ENCODE measurements at regions of chr1 and their contacts with region 1.

Region 1: DNA sequence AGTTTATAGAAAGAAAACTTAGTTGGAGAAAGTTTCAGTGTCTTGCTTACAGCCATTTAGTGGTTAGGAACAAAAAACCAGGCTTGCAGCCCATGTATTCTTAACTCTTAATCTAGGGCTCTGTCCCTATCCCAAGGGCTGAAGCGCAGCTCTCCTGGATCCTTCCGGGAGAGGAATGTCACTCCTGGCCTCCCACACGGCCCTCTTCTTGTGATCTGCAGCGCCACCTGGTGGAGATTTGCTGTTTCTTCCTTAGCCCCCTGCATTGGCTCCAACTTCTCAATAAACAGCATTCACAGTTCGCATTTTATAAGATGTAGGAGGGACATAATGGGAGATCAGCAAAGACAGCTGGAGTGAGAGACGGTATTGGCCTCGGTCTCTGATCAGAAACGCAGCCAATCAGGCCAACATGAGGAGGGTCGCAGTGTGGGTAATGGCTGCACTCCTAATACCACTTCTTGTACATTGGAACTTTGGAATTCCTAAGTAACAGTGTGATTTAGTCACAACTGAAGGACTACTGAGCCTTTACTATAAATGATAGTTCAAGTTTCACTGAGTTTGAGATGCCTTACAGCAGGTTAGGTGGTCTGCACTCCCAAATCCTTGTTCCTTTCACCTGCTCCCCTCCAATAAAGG is 283.4 kb downstream of the ASTN1 start:
- DNase-seq: peak in 1 of 2 experiments; percentile 38
- H3K4me3 ChIP-seq: no peak overlapping the region
- H3K27ac ChIP-seq: no peak overlapping the region
- H3K4me1 ChIP-seq: no peaks in the 10 kb centered on the region
- H3K27me3 ChIP-seq: peaks cover 17% of the 10 kb centered on the region
- CTCF ChIP-seq: peak; percentile 89

Region 2: DNA sequence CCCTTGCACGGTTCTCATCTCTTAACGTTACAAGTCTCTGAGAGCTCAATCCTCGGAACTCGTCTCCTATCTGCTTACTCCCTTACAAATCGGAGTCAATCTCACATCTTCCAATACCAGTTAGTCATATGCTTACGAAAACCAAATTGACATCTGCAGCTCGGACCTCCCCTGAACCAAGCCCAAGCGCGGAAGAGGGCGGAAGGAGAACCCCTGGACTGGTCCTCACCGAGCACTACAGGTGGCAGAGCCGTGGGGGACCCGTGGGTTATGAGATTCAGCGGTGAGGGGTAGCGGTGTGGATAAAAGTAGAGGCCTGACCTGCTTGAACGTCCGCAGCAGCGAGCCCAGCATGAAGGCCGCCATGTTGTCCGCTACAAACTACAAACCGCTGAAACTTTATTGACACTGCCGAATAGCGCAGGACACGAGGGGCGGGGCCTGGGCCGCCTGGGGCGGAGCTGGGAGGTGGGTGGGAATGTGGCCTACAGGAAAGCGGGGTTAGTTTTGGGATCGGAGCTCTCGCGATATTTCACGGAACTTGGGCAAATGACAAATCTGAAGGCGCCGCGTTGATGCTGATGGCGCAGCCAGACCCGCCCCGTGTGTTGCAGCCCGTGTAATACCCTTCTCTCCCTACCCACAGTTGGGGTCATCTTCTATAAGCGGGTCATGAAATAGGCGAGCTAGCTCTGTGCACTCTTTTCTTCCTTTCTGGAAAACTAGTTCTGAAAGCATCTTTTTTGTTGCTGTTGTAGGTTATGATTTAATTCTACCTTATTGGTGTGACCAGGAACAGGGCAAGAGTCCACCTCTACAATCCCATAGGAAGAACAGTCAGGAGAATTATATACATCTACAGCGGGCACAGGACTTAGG is 1857.8 kb before region 1 on chr1 and contains the start of gene MRPS14:
- CTCF ChIA-PET with region 1: no interaction called
- POLR2A ChIA-PET with region 1: no interaction called
- intact Hi-C with region 1: loop called (anchors 5 kb)
- DNase-seq: peak; percentile 88 to 96
- H3K4me3 ChIP-seq: peak within 1 kb of the TSS; percentile 95
- H3K27ac ChIP-seq: peak within 1 kb of the TSS; percentile 82
- H3K4me1 ChIP-seq: peaks cover 12% of the 10 kb centered on the region; the same call in 1 of the 2 replicates
- H3K27me3 ChIP-seq: no peaks in the 10 kb centered on the region
- CTCF ChIP-seq: no peak
- total RNA-seq, gene MRPS14: 24.1 and 28.8 TPM in 2 replicates

Region 3: GRCh38 chr1:176374967-176375569 is 506.0 kb before region 1 on chr1:
- CTCF ChIA-PET with region 1: no interaction called
- POLR2A ChIA-PET with region 1: no interaction called
- intact Hi-C with region 1: loop called (anchors 1 kb)
- DNase-seq: peak; percentile 42 to 59
- H3K4me3 ChIP-seq: no peak overlapping the region
- H3K27ac ChIP-seq: no peak overlapping the region
- H3K4me1 ChIP-seq: no peaks in the 10 kb centered on the region
- H3K27me3 ChIP-seq: peaks cover 6% of the 10 kb centered on the region
- CTCF ChIP-seq: peak; percentile 89

Region 4: GRCh38 chr1:176559878-176560277 is 321.2 kb before region 1 on chr1:
- CTCF ChIA-PET with region 1: no interaction called
- POLR2A ChIA-PET with region 1: no interaction called
- intact Hi-C with region 1: loop called (anchors 1 kb)
- DNase-seq: peak; percentile 10 to 42
- H3K4me3 ChIP-seq: no peak overlapping the region
- H3K27ac ChIP-seq: no peak overlapping the region
- H3K4me1 ChIP-seq: no peaks in the 10 kb centered on the region
- H3K27me3 ChIP-seq: peaks cover 25% of the 10 kb centered on the region
- CTCF ChIP-seq: peak; percentile 91

Region 5: GRCh38 chr1:176754676-176755075 is 126.4 kb before region 1 on chr1:
- CTCF ChIA-PET with region 1: no interaction called
- POLR2A ChIA-PET with region 1: no interaction called
- intact Hi-C with region 1: no loop called
- DNase-seq: no peak
- H3K4me3 ChIP-seq: no peak overlapping the region
- H3K27ac ChIP-seq: no peak overlapping the region
- H3K4me1 ChIP-seq: no peaks in the 10 kb centered on the region
- H3K27me3 ChIP-seq: no peaks in the 10 kb centered on the region
- CTCF ChIP-seq: no peak

Region 6: DNA sequence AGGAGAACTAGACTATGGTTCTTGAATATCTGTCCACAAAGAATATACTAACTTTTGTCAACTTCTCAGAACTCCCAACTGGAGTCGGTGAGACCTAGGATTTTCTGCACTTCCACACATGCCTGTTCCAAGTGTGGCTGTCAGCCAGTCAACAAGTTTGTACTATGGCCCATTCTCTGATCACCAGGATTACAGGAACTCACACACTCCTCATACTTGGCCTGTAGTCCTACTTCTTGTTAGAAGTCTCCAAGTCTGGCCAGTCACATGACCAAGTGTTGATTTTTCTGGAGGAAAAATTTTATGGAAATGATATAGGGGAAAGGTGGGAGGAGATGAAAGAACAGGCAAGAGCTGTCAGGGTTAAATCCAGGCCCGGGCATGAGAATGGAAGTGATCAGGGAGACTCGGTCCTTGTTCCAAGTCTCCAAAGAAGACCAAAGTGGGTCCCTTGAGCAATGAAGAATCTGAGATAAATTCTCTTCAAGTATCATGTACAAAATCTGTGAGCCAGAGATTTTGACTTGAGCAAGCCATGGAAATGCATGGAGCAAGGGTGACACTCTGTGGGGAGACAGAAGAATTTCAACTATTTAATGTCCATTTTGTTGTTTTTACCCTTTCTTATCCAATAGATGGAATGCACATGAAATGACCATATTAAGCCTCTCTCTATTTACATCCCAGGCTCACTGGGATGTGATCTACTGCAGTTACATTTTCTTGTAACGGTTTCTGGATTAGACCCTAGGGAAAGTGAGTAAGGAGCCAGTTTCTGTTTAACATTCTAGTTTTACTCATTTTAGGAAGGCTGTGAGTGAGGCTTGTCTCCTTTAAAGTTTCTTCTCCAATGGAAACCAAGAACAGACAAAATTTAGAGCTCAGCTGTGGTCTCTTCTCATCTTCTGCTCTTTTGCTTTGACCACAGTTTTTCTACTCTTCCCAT is 37.5 kb before region 1 on chr1:
- CTCF ChIA-PET with region 1: no interaction called
- POLR2A ChIA-PET with region 1: no interaction called
- intact Hi-C with region 1: no loop called
- DNase-seq: peak in 1 of 2 experiments; percentile 2
- H3K4me3 ChIP-seq: no peak overlapping the region
- H3K27ac ChIP-seq: no peak overlapping the region
- H3K4me1 ChIP-seq: no peaks in the 10 kb centered on the region
- H3K27me3 ChIP-seq: no peaks in the 10 kb centered on the region; the same call in none of the 2 replicates
- CTCF ChIP-seq: peak; percentile 60

Region 7: DNA sequence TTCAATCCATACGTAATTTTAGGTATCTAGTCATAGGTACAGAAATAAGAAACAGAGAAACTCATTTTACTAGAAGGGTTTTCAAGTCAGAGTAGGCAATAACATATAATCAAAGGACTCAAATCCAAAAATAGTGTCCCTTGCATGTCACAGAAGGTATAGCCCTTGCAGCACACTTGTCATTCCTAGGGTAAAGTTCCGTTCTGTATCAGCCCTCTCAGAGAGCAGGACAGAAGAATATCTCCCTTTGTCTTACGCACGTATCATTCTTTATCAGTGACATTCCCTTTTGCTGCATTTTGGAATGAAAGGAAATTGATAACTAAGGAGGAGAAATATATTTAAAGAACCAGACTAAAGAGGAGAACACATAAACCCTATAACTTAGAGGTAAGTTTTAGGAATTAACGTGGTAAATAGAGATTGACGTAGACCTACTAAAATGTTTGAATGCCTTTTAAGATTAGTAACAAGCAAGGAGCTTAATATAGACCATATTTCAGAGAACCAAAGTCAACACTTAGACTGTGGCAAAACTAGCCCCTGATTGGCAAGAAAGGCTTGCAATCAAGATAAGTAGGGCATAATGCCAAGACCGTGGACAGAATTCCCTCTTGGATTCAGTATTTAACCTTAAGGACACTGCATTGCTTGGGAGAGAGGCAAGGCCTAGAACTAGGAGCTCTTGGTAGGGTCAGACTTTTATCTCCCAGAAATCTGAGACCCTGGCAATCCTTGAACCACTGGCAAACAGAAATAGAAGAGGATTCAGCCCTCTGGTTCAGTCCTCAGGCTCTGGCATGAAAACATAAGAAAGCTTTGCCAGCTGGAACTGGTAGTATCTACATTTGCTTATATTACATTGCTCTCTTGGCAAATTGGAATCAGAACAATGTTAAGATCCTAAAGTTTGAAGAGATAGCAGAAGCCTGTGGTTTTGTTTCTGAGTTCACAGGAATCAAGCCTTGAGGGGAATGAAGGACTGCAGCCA is 51.3 kb after region 1 on chr1:
- CTCF ChIA-PET with region 1: no interaction called
- POLR2A ChIA-PET with region 1: no interaction called
- intact Hi-C with region 1: no loop called
- DNase-seq: no peak
- H3K4me3 ChIP-seq: no peak overlapping the region
- H3K27ac ChIP-seq: no peak overlapping the region
- H3K4me1 ChIP-seq: no peaks in the 10 kb centered on the region
- H3K27me3 ChIP-seq: peaks cover 31% of the 10 kb centered on the region
- CTCF ChIP-seq: no peak